Lower leg skin (tissue), 4 donors: ENCODE measurements at regions of chr5 and their contacts with region 1.

Region 1: GRCh38 chr5:8114597-8115266 is 245.8 kb downstream of the MTRR start:
- DNase-seq: no peak
- H3K4me3 ChIP-seq: no peak overlapping the region
- CTCF ChIP-seq: no peak
- POLR2A ChIP-seq: no peak

Region 2: DNA sequence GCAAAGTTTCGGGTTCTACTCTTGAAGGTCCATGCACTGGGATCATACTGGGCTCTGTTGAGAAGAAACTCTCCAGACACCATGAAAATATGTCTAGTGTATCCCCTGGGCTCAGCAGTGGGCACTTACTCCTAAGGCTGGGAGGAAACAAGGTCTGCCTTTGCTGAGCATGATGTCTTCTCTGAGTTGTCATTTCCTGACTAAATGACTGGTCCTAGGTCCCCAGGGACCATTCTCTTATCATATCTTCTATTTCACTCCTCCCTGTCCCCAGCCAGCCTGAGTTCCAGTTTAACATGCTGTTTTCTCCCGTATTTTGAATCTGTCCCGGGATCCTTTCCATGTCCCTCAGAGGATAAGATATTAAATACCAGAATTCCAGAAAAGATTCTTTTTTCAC is 20.4 kb before region 1 on chr5:
- intact Hi-C with region 1: no loop called
- DNase-seq: no peak
- H3K4me3 ChIP-seq: no peak overlapping the region
- CTCF ChIP-seq: no peak
- POLR2A ChIP-seq: no peak

Region 3: DNA sequence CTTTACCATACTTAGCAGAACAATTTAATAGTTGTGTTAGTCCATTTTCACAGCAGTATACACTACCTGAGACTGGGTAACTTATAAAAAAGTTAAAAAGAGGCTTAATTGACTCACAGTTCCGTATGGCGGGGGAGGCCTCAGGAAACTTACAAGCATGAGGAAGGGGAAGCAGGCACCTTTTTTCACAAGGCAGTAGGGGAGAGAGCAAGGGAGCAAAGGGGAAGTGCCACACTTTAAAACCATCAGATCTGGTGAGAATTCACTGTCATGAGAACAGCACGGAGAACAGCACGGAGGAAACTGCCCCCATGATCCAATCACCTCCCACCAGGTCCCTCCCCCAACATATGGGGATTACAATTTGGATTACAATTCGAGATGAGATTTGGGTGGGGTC is 24.2 kb after region 1 on chr5:
- intact Hi-C with region 1: loop called (anchors 1 kb)
- DNase-seq: no peak
- H3K4me3 ChIP-seq: no peak overlapping the region
- CTCF ChIP-seq: no peak
- POLR2A ChIP-seq: no peak